Activated CD4-positive, alpha-beta T cell treated with anti-CD3 and anti-CD28 coated beads, Interleukin-2, amount 10 ng/mL, durations not matched to agents 24 days and 14 days (primary cell): ENCODE measurements at regions of chr2 and their contacts with region 1.

Region 1: DNA sequence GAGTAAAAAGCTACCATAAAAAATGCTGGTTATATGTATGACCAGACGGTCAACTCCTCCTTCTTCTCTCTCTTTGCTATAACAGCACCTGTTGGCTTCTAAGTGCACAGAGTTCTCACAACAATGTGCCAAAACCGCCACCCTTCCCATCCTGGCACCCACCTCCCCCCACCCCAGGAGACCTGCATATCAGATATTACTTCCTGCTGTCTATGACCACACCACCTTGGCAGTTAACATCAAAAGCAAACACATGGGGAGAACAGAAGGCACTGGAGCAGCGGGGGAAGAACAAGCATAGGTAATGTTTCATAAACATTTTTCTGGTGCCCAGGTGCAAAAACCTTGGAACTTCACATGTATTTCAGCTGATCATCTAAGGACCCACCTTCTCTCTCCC is 15.5 kb downstream of the SPRED2 start:
- DNase-seq: no peak
- H3K4me3 Mint-ChIP-seq: peak overlapping the region; percentile 4
- H3K27ac Mint-ChIP-seq: peak overlapping the region; percentile 25
- H3K4me1 Mint-ChIP-seq: peaks cover 29% of the 10 kb centered on the region
- H3K27me3 Mint-ChIP-seq: no peaks in the 10 kb centered on the region

Region 2: GRCh38 chr2:65396348-65397026 is 20.5 kb before region 1 on chr2:
- intact Hi-C with region 1: loop called (anchors 2 kb)
- DNase-seq: no peak
- H3K4me3 Mint-ChIP-seq: no peak overlapping the region
- H3K27ac Mint-ChIP-seq: no peak overlapping the region
- H3K4me1 Mint-ChIP-seq: peaks cover 46% of the 10 kb centered on the region
- H3K27me3 Mint-ChIP-seq: peaks cover 5% of the 10 kb centered on the region